ENCODE measurements at regions of chr19 and their contacts with region 1.

Region 1: DNA sequence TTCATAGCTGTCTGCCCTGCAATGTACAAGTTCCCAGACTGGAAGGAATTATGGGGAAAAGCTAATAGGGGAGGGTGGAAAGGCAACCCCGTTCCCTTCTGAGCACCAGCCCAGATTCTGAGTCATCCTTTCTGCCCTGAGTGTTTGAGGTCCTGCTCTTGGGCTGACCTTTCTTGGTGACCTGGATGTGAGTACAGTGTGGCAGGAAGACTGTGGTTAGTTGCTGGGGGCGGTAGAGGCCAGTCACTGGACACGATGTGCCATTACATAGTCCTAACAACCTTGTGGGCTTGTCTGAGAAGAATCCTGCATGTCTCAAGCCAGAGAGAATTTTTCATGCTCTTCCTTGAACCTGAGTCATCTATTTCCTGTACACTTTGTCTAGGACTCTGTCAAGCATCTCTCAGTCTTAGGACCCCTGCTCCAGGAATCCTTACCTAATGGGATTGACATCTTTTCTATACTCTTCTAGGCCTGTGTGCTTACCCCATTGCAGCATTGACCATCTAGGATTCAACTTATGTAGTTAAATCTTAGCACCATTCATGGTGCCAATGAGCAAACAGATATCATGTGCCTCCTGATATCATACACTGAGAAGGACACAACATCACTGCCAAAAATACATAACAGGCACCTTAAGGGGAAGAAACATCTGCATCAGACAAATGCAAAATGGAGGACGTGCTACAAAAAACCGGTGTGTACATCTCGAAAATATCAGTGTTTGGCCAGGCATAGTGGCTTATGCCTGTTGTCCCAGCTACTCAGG is 8.1 kb upstream of the ANGPTL4 start:
- DNase-seq: no peak
- H3K4me3 ChIP-seq: no peak overlapping the region
- H3K4me3 Mint-ChIP-seq: peak overlapping the region in 1 of 8 donors; percentile 1
- H3K27ac ChIP-seq: no peak overlapping the region
- H3K27ac Mint-ChIP-seq: no peak overlapping the region
- H3K4me1 ChIP-seq: no peaks in the 10 kb centered on the region
- H3K4me1 Mint-ChIP-seq: peaks cover 0 to 5% (median 2%) of the 10 kb centered on the region in 4 donors
- H3K27me3 ChIP-seq: no peaks in the 10 kb centered on the region
- H3K27me3 Mint-ChIP-seq: peaks cover 6 to 11% of the 10 kb centered on the region in 2 donors

Region 2: DNA sequence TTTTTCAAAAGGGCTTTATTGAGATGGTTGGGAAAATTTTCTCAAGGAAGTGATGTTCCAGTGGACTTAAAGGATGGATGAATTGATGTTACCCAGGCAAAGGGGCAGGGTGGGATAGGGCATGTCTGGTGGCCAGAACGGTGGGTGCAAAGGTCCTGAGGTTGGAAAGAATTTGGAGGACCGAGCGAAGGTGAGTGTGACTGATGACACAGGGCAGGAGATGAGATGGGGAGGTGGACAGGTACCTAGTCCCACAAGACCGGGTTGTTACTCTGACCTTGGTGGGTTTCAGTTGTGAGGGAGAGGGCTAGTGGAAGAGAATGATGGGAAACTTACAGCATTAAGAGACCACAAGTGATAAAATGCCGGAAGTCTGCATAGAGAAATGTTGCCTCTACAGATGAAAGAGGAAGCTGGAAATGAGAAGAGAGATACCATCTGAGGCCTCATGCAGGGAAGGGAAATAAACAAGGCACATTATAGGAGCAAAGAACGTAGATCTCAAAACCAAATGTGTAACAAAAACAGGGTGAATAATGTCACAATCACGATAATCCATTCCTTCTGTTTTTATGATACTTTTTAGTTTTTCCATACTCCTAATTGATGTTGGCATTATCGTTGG is 1463.9 kb before region 1 on chr19:
- CTCF ChIA-PET with region 1: no interaction called
- POLR2A ChIA-PET with region 1: no interaction called
- intact Hi-C with region 1: no loop called
- DNase-seq: peak in 4 of 5 donors; percentile 26 to 48 (median 29)
- H3K4me3 ChIP-seq: no peak overlapping the region
- H3K4me3 Mint-ChIP-seq: peak overlapping the region; percentile 67 to 80 (median 74)
- H3K27ac ChIP-seq: peak overlapping the region; percentile 3
- H3K27ac Mint-ChIP-seq: peak overlapping the region; percentile 78 to 95 (median 90)
- H3K4me1 ChIP-seq: peaks cover 68% of the 10 kb centered on the region
- H3K4me1 Mint-ChIP-seq: peaks cover 64 to 95% (median 75%) of the 10 kb centered on the region in 4 donors
- H3K27me3 ChIP-seq: no peaks in the 10 kb centered on the region
- H3K27me3 Mint-ChIP-seq: no peaks in the 10 kb centered on the region

Region 3: DNA sequence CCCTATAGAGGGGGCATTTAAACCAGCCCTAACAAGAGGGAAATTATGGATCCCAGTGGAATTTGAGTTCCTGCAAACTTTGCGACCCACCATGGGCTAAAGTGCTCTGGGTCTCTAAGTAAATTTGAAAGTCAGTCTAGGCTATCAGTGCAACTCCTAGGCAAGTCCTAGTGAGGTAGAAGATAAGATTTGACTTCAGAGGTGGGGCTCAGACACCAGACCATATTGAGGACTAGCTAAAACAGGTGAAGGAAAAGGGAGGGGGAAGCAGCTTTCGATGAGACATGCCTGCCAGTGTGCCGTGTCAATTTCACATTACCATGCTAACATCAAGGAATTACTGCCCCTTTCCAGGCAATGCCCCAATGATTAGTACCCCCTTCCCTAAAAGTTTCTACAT is 86.1 kb before region 1 on chr19:
- CTCF ChIA-PET with region 1: interaction called, 18 read pairs
- POLR2A ChIA-PET with region 1: no interaction called
- intact Hi-C with region 1: no loop called
- DNase-seq: no peak
- H3K4me3 ChIP-seq: peak overlapping the region; percentile 66 to 88
- H3K4me3 Mint-ChIP-seq: peak overlapping the region; percentile 90 to 97 (median 92)
- H3K27ac ChIP-seq: peak overlapping the region; percentile 76
- H3K27ac Mint-ChIP-seq: peak overlapping the region; percentile 86 to 97 (median 93)
- H3K4me1 ChIP-seq: peaks cover 10% of the 10 kb centered on the region
- H3K4me1 Mint-ChIP-seq: peaks cover 7 to 16% (median 11%) of the 10 kb centered on the region in 4 donors
- H3K27me3 ChIP-seq: no peaks in the 10 kb centered on the region
- H3K27me3 Mint-ChIP-seq: no peaks in the 10 kb centered on the region

Region 4: GRCh38 chr19:8342684-8343482 is 12.9 kb before region 1 on chr19 and contains the start of gene KANK3:
- CTCF ChIA-PET with region 1: interaction called, 76 read pairs
- POLR2A ChIA-PET with region 1: interaction called, 10 read pairs
- intact Hi-C with region 1: no loop called
- DNase-seq: peak; percentile 88 to 94 (median 89)
- H3K4me3 ChIP-seq: peak within 1 kb of the TSS; percentile 11 to 52
- H3K4me3 Mint-ChIP-seq: peak within 1 kb of the TSS; percentile 82 to 88 (median 86)
- H3K27ac ChIP-seq: peak within 1 kb of the TSS; percentile 43
- H3K27ac Mint-ChIP-seq: peak within 1 kb of the TSS; percentile 24 to 82 (median 70)
- H3K4me1 ChIP-seq: peaks cover 10% of the 10 kb centered on the region
- H3K4me1 Mint-ChIP-seq: peaks cover 0 to 13% (median 8%) of the 10 kb centered on the region in 4 donors
- H3K27me3 ChIP-seq: no peaks in the 10 kb centered on the region
- H3K27me3 Mint-ChIP-seq: peaks cover 0 to 7% of the 10 kb centered on the region in 2 donors
- total RNA-seq, gene KANK3: 5.0 to 6.3 TPM

Region 5: GRCh38 chr19:8396563-8397203 is 40.9 kb after region 1 on chr19:
- CTCF ChIA-PET with region 1: interaction called, 13 read pairs
- POLR2A ChIA-PET with region 1: interaction called, 3 read pairs
- intact Hi-C with region 1: loop called (anchors 1 kb)
- DNase-seq: peak; percentile 57 to 81 (median 75)
- H3K4me3 ChIP-seq: no peak overlapping the region
- H3K4me3 Mint-ChIP-seq: peak overlapping the region in 2 of 8 donors; percentile 48 to 60
- H3K27ac ChIP-seq: no peak overlapping the region
- H3K27ac Mint-ChIP-seq: peak overlapping the region in 6 of 7 donors; percentile 26 to 93 (median 84)
- H3K4me1 ChIP-seq: peaks cover 20% of the 10 kb centered on the region
- H3K4me1 Mint-ChIP-seq: peaks cover 19 to 40% (median 28%) of the 10 kb centered on the region in 4 donors
- H3K27me3 ChIP-seq: no peaks in the 10 kb centered on the region
- H3K27me3 Mint-ChIP-seq: no peaks in the 10 kb centered on the region

Region 6: DNA sequence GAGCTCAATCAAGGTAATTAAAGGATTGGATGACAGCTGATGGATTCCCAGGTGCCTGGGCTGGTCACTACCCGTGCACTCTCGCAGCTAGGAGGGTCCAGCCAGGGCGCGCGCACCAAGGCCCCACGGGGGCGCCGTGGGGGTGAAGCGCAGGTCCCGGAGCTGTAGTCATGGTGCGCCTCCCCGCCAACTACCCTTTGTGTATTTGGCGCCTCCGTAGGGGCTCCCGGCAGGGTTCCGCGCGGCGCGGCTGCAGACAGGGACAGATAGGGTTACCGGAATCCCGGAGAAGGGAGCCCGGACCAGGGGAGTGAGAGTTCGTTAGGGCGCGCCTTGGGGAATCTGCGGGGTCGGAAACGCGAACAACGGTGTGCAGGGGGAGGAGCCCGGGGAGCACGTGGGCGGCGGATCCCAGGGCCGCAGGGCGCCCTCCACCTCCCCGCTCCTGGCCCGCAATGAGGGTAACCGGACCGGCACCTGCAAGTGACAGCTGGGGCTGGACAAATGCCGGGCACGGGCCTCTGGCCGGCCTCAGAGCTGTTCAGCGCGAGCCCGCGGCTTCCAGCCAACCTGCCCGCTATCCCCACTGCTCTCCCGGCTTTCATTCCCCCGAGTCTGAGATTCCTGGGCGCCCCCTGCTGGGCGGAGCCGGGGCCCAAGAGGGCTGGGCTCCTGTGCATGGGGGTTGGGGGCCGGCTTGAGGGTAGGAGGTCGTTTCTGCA is 150.0 kb after region 1 on chr19:
- CTCF ChIA-PET with region 1: interaction called, 8 read pairs
- POLR2A ChIA-PET with region 1: no interaction called
- intact Hi-C with region 1: loop called (anchors 5 kb)
- DNase-seq: peak; percentile 44 to 71 (median 60)
- H3K4me3 ChIP-seq: peak overlapping the region; percentile 52 to 57
- H3K4me3 Mint-ChIP-seq: peak overlapping the region; percentile 88 to 95 (median 91)
- H3K27ac ChIP-seq: peak overlapping the region; percentile 22
- H3K27ac Mint-ChIP-seq: peak overlapping the region; percentile 74 to 94 (median 87)
- H3K4me1 ChIP-seq: peaks cover 13% of the 10 kb centered on the region
- H3K4me1 Mint-ChIP-seq: peaks cover 4 to 33% (median 9%) of the 10 kb centered on the region in 4 donors
- H3K27me3 ChIP-seq: no peaks in the 10 kb centered on the region
- H3K27me3 Mint-ChIP-seq: no peaks in the 10 kb centered on the region

Region 7: GRCh38 chr19:8641908-8642547 is 286.2 kb after region 1 on chr19:
- CTCF ChIA-PET with region 1: interaction called, 24 read pairs
- POLR2A ChIA-PET with region 1: no interaction called
- intact Hi-C with region 1: no loop called
- DNase-seq: peak in 4 of 5 donors; percentile 44 to 53 (median 48)
- H3K4me3 ChIP-seq: no peak overlapping the region
- H3K4me3 Mint-ChIP-seq: no peak overlapping the region
- H3K27ac ChIP-seq: no peak overlapping the region
- H3K27ac Mint-ChIP-seq: no peak overlapping the region
- H3K4me1 ChIP-seq: no peaks in the 10 kb centered on the region
- H3K4me1 Mint-ChIP-seq: peaks cover 0 to 4% (median under 1%) of the 10 kb centered on the region in 4 donors
- H3K27me3 ChIP-seq: no peaks in the 10 kb centered on the region
- H3K27me3 Mint-ChIP-seq: peaks cover 16 to 19% of the 10 kb centered on the region in 2 donors

Measured in CD4-positive, alpha-beta memory T cell (primary cell).